RWPE1 (cell line): ENCODE measurements at regions of chr2 and their contacts with region 1.

Region 1: GRCh38 chr2:202752071-202752470 is 117.3 kb downstream of the FAM117B start:
- DNase-seq: no peak
- H3K27ac ChIP-seq: no peak overlapping the region
- CTCF ChIP-seq: no peak

Region 2: GRCh38 chr2:203344667-203345066 is 592.6 kb after region 1 on chr2:
- CTCF ChIA-PET with region 1: no interaction called
- POLR2A ChIA-PET with region 1: interaction called, 10 read pairs
- DNase-seq: no peak
- H3K27ac ChIP-seq: no peak overlapping the region
- CTCF ChIP-seq: no peak